Heart left ventricle (tissue), 16 donors: ENCODE measurements at regions of chr14 and their contacts with region 1.

Region 1: GRCh38 chr14:60184146-60184904 is 19.1 kb upstream of the DHRS7 start:
- DNase-seq: no peak
- ATAC-seq: peak in 2 of 4 donors; percentile 52 to 71
- H3K4me3 ChIP-seq: peak overlapping the region in 11 of 12 donors; percentile 21 to 60 (median 47)
- H3K27ac ChIP-seq: peak overlapping the region in 8 of 12 donors; percentile 13 to 52 (median 38)
- H3K4me1 ChIP-seq: peaks cover 0 to 8% (median 0%) of the 10 kb centered on the region in 12 donors
- H3K27me3 ChIP-seq: no peaks in the 10 kb centered on the region
- CTCF ChIP-seq: peak; percentile 58 to 89 (median 78)
- POLR2A ChIP-seq: no peak

Region 2: DNA sequence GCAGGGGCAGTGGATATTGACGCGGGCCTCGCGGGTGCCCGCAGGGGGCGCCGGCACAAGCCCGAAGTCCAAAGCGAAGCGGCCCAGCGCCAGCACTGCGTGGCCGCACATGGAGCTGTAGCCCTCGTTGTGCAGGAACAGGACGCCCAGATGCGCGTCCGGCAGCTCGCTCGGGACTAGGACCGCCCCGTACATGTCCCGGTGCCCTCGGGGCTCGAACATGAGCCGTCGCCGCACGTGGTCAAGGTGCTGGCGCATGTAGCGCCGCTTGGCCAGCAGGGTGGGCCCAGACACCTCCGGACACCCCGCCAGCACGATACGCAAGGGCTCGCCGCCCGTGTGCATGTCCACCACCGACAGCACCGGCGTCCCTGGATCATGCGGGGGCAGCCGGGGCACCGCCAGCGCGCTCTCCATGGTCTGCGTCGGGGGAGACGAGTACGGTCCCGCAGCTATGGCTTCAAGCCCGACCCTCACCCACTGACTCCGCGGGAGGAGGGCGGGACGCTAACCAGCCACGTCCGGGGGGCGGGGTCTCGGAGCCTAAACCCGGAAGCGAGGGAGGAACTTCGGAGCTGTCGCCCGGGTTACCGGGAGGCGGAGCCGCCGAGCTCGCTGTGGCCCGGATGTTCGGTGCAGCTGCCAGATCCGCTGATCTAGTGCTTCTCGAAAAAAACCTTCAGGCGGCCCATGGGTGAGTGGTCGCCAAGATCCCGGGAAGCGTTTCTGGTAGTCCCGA is 700.3 kb before region 1 on chr14 and contains the starts of genes JKAMP and L3HYPDH:
- intact Hi-C with region 1: loop called in 1 of 10 experiments (anchors 10 kb)
- DNase-seq: peak; percentile 98 to 99 (median 98)
- ATAC-seq: peak; percentile 97 to 98 (median 98)
- H3K4me3 ChIP-seq: peak within 1 kb of the TSS; percentile 54 to 94 (median 84)
- H3K27ac ChIP-seq: peak within 1 kb of the TSS; percentile 69 to 97 (median 96)
- H3K4me1 ChIP-seq: peaks cover 3 to 75% (median 51%) of the 10 kb centered on the region in 12 donors
- H3K27me3 ChIP-seq: no peaks in the 10 kb centered on the region
- CTCF ChIP-seq: peak; percentile 55 to 78 (median 66)
- POLR2A ChIP-seq: peak in 1 of 2 donors; percentile 80
- total RNA-seq, gene JKAMP: 24.2 to 38.6 (median 31.2) TPM
- total RNA-seq, gene L3HYPDH: 8.7 to 17.9 (median 14.1) TPM

Region 3: DNA sequence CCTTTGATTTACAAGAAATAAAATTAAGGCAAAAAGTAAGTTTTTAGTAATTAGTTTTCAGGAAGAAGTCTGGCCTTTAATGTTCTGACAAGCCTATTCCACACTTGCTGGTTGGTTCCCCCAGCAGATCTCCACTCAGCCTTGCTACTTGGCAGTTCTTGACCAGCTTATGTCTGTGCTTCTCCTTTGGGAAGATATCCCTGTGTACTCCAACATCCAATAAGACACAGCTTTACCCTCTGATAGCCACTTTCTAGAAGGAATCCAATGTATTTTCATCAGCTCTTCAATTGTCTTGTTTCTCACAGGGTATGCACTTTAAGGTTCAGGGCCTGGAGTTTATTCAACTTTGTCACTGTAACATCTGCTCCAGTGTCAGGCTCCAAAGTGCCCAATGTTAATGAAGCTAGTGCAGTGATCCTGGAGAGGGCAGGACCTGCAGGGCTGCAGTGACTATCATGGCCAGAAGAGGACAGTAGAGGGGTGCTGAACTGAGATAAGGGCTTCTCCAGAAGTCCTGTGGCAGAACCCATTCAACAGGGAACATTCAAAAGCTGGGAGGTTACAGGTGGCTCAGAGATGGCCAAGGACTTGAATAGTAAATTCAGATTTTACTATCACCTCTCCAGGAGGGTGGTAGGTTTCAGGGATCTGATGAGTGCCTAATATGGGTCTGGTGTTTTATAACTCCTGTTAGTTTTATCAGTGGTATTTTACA is 677.1 kb before region 1 on chr14:
- intact Hi-C with region 1: loop called in 1 of 10 experiments (anchors 10 kb)
- DNase-seq: peak in 3 of 5 donors; percentile 17 to 40 (median 23)
- ATAC-seq: peak in 3 of 4 donors; percentile 63 to 81 (median 77)
- H3K4me3 ChIP-seq: no peak overlapping the region
- H3K27ac ChIP-seq: no peak overlapping the region
- H3K4me1 ChIP-seq: no peaks in the 10 kb centered on the region
- H3K27me3 ChIP-seq: peaks cover 0 to 4% (median 0%) of the 10 kb centered on the region in 9 donors
- CTCF ChIP-seq: peak; percentile 53 to 72 (median 64)
- POLR2A ChIP-seq: no peak

Region 4: DNA sequence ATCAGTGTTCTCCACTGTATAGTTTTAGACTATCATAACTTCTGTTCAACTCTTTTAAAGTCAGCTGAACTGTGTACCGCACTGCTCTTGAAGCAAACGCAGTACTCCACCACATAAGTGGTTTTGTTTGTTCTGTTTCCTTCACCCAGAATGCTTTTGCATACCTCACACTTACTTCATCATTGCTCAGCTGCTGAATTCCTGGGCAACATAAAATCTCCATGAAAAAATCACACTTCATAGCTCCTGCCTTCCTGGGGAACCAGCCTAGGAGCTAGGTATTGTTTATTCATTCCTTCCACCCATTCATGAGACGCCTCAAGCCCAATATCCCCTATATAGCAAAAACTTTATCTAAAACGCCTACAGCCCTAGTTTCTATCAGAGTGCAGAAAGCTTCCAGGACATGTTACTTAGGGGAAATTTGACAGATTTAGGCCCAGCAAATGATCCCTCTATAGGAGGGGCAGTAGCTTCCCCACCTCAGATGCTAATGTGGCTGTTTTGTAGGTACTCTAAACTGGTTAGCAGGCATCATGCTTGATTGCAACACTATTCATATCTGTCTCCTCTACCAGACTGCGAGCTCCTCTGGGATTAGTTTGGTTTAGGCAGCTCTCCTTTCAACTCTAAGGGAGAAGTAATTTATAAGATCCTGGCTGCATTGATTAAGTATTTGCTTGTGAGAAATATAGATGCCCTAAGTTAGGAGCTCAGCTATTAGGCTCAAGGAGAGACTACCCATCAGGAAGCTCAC is 219.9 kb before region 1 on chr14:
- intact Hi-C with region 1: loop called (anchors 1 to 5 kb)
- DNase-seq: no peak
- ATAC-seq: peak in 2 of 4 donors; percentile 14 to 22
- H3K4me3 ChIP-seq: peak overlapping the region in 3 of 12 donors; percentile 19 to 64 (median 45)
- H3K27ac ChIP-seq: no peak overlapping the region
- H3K4me1 ChIP-seq: peaks cover 0 to 4% (median 0%) of the 10 kb centered on the region in 12 donors
- H3K27me3 ChIP-seq: no peaks in the 10 kb centered on the region
- CTCF ChIP-seq: no peak
- POLR2A ChIP-seq: no peak

Region 5: GRCh38 chr14:60064491-60065072 is 119.7 kb before region 1 on chr14:
- intact Hi-C with region 1: loop called (anchors 1 to 5 kb)
- DNase-seq: no peak
- ATAC-seq: no peak
- H3K4me3 ChIP-seq: no peak overlapping the region
- H3K27ac ChIP-seq: no peak overlapping the region
- H3K4me1 ChIP-seq: no peaks in the 10 kb centered on the region
- H3K27me3 ChIP-seq: no peaks in the 10 kb centered on the region
- CTCF ChIP-seq: peak; percentile 38 to 78 (median 66)
- POLR2A ChIP-seq: no peak

Region 6: DNA sequence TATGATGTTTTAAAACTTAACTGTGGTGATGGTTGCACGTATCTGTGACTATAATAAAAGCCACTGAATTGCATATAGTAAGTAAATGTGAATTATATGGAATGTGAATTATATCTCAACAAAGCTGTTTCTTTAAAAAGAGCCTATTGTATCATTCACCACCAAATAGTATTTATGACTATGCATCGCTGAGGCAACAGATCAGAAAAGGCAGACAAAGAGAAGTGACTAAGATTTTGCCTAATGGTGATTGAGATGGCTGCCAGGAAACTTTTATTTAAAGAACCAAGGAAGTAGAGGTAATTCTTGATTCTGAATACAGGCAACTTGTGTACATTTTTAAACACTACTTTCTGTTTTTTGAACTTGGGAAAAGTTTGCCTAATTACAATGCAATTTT is 50.8 kb before region 1 on chr14:
- intact Hi-C with region 1: no loop called
- DNase-seq: no peak
- ATAC-seq: no peak
- H3K4me3 ChIP-seq: no peak overlapping the region
- H3K27ac ChIP-seq: no peak overlapping the region
- H3K4me1 ChIP-seq: no peaks in the 10 kb centered on the region
- H3K27me3 ChIP-seq: no peaks in the 10 kb centered on the region
- CTCF ChIP-seq: no peak
- POLR2A ChIP-seq: no peak